MCF 10A (cell line): ENCODE measurements at regions of chr15 and their contacts with region 1.

Region 1: DNA sequence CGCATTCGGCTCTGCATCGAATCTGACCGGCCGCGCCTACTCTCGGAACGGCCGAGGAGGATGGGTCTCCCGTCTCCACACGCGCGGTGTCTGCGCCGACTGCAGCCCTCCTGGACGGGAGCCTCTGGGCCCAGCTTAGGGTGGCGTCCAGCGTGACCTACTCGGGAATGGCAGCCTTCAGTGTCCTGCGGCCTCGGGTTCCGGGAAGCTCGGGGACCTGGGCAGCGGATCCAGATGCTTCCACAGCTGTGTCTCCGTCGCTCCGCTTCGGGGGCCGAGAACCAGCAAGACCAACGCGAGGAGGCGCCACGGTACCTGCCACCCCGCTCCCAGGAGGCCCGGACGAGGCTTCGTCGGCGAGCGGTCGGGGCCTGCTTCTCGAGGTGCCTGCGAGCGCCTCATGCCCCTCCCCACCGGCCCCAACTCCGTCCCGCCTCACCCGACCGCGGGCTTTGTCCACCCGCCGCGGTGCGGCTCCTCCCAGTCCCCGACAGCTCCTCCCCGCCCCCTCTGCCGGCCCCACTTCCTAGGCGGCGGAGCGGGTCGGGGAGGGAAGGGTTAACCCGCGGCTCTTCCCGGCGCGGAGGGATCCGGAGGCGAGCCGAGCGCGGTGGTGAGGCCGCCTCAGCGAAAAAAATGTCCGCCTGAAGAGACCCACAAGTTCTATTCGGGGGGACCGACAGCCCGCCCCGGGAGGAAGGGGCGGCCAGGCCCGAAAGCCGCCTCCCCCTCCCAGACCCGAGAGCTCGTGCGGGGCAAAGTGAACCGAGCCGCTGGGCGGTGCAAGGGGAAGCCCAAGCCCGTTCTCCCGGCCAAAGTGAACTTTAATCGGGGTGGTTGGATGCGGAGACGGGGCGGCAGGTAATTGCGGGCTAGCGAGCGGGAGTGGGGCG is at the start of gene TCF12:
- DNase-seq: peak; percentile 93
- H3K4me3 Mint-ChIP-seq: peak within 1 kb of the TSS; percentile 85
- H3K27ac Mint-ChIP-seq: peak within 1 kb of the TSS; percentile 76
- H3K4me1 Mint-ChIP-seq: peaks cover 6% of the 10 kb centered on the region
- H3K27me3 Mint-ChIP-seq: no peaks in the 10 kb centered on the region
- CTCF ChIP-seq: peak; percentile 41
- total RNA-seq, gene TCF12: 140 and 163 TPM in 2 replicates

Region 2: DNA sequence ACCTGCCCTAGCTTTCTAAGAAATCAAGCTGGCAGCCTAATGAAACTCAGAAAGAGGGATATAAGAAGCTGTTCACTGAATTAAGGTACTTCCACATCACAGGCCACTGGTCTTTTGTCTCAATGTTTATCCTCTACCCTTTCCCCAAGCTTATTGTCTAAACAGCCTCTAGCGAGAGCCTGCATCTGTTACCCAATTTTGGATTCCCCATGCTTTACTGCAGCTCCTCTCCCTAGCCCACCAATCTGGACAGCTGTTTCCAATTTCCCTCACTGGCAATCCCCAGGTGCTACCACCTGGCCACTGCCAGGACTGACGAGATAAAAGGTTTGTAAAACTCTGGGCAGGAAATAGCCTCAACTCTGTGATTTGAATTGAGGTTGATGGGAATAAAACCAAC is 611.2 kb before region 1 on chr15:
- CTCF ChIA-PET with region 1: no interaction called
- POLR2A ChIA-PET with region 1: no interaction called
- intact Hi-C with region 1: no loop called
- DNase-seq: no peak
- H3K4me3 Mint-ChIP-seq: no peak overlapping the region
- H3K27ac Mint-ChIP-seq: no peak overlapping the region
- H3K4me1 Mint-ChIP-seq: no peaks in the 10 kb centered on the region
- H3K27me3 Mint-ChIP-seq: no peaks in the 10 kb centered on the region
- CTCF ChIP-seq: no peak

Region 3: DNA sequence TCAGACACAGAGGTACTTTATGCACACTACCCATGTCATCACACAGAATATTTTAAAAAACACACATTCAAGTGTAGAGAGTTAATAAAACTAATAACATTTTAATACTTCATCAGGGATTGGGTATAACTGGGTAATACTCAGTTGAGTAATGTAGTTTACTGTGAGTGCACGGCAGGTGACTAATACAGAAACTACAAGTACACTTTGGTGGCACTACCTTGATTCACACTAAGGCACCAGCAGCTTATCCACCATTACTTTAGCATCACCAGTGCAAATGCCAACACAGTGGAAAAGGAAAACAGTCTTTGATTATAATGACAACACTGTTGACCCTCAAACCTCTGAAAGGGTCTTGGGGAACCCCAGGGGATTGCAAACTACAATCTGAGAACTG is 218.5 kb before region 1 on chr15:
- CTCF ChIA-PET with region 1: no interaction called
- POLR2A ChIA-PET with region 1: no interaction called
- intact Hi-C with region 1: no loop called
- DNase-seq: no peak
- H3K4me3 Mint-ChIP-seq: no peak overlapping the region
- H3K27ac Mint-ChIP-seq: no peak overlapping the region
- H3K4me1 Mint-ChIP-seq: no peaks in the 10 kb centered on the region
- H3K27me3 Mint-ChIP-seq: no peaks in the 10 kb centered on the region
- CTCF ChIP-seq: no peak

Region 4: GRCh38 chr15:56821721-56822425 is 96.4 kb before region 1 on chr15:
- CTCF ChIA-PET with region 1: interaction called, 3 read pairs
- POLR2A ChIA-PET with region 1: interaction called, 7 read pairs
- intact Hi-C with region 1: loop called (anchors 5 kb)
- DNase-seq: peak; percentile 74
- H3K4me3 Mint-ChIP-seq: no peak overlapping the region
- H3K27ac Mint-ChIP-seq: no peak overlapping the region
- H3K4me1 Mint-ChIP-seq: peaks cover 14% of the 10 kb centered on the region
- H3K27me3 Mint-ChIP-seq: no peaks in the 10 kb centered on the region
- CTCF ChIP-seq: peak; percentile 72

Region 5: GRCh38 chr15:56892659-56893356 is 25.5 kb before region 1 on chr15:
- CTCF ChIA-PET with region 1: interaction called, 4 read pairs
- POLR2A ChIA-PET with region 1: interaction called, 88 read pairs
- intact Hi-C with region 1: no loop called
- DNase-seq: no peak
- H3K4me3 Mint-ChIP-seq: no peak overlapping the region
- H3K27ac Mint-ChIP-seq: no peak overlapping the region
- H3K4me1 Mint-ChIP-seq: peaks cover 15% of the 10 kb centered on the region
- H3K27me3 Mint-ChIP-seq: no peaks in the 10 kb centered on the region
- CTCF ChIP-seq: no peak

Region 6: DNA sequence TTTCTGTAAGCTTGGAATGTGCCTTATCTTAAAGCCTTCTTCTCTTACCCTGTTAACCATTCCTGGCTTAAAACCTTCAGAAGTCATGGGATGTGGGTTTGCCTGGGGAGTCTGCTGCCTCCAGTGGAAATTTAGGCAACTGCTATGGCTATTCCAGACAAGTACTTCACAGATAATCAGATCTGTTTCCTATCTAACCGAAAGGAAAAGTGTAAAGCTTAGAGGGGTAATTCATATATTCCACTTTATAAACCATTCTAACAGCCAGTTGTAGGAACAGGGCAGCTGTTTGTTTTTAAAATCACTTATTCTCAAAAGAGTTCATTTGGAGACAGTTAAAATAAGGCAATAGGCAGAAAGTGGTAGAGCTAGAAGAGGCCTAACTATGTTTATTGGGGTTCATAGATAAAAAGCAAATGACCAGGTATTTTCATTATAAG is 220.1 kb after region 1 on chr15:
- CTCF ChIA-PET with region 1: interaction called, 8 read pairs
- POLR2A ChIA-PET with region 1: interaction called, 20 read pairs
- intact Hi-C with region 1: loop called (anchors 1 kb)
- DNase-seq: peak; percentile 65
- H3K4me3 Mint-ChIP-seq: no peak overlapping the region
- H3K27ac Mint-ChIP-seq: no peak overlapping the region
- H3K4me1 Mint-ChIP-seq: no peaks in the 10 kb centered on the region
- H3K27me3 Mint-ChIP-seq: no peaks in the 10 kb centered on the region
- CTCF ChIP-seq: peak; percentile 66

Region 7: DNA sequence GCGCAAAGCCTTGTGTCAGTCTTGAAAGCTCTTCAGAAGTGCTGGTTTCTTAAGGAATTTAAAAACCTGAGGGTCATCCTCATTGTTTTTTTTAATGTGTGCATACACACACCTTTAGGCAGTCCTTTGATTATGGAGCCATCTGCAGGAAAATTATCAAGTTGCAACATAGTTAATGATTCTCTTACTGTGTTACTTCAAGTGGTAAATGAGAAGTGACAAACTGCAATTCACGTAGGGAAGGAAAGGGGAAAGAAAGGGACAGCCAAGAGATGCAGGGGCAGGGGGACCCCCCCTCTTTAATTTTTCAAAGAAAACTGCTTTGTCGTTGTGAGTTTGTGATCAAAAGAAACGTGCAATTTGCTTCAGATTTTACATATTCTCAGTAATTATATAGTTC is 295.6 kb after region 1 on chr15:
- CTCF ChIA-PET with region 1: interaction called, 7 read pairs
- POLR2A ChIA-PET with region 1: interaction called, 3 read pairs
- intact Hi-C with region 1: loop called (anchors 1 kb)
- DNase-seq: peak; percentile 46
- H3K4me3 Mint-ChIP-seq: no peak overlapping the region
- H3K27ac Mint-ChIP-seq: no peak overlapping the region
- H3K4me1 Mint-ChIP-seq: peaks cover 11% of the 10 kb centered on the region
- H3K27me3 Mint-ChIP-seq: no peaks in the 10 kb centered on the region
- CTCF ChIP-seq: peak; percentile 37

Region 8: DNA sequence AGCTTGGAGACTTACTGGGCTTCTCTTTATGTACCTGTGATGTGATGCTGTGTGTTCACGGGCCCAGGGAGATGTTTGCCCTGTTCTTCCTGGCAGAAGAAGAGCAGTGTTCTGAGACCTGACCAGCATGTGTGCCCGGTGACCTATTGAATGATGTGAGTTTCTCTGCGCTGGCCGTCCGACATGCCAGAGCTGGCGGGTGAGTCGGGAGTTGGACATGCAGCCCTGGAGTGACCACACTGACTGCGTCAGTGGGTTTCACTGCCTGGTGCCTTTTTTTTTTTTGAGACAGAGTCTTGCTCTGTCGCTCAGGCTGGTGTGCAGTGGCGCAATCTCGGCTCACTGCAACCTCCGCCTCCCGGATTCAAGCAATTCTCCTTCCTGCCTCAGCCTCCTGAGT is 500.4 kb after region 1 on chr15:
- CTCF ChIA-PET with region 1: no interaction called
- POLR2A ChIA-PET with region 1: no interaction called
- intact Hi-C with region 1: no loop called
- DNase-seq: no peak
- H3K4me3 Mint-ChIP-seq: no peak overlapping the region
- H3K27ac Mint-ChIP-seq: no peak overlapping the region
- H3K4me1 Mint-ChIP-seq: no peaks in the 10 kb centered on the region
- H3K27me3 Mint-ChIP-seq: peaks cover 19% of the 10 kb centered on the region
- CTCF ChIP-seq: no peak